ENCODE measurements at regions of chr3 and their contacts with region 1.

Region 1: DNA sequence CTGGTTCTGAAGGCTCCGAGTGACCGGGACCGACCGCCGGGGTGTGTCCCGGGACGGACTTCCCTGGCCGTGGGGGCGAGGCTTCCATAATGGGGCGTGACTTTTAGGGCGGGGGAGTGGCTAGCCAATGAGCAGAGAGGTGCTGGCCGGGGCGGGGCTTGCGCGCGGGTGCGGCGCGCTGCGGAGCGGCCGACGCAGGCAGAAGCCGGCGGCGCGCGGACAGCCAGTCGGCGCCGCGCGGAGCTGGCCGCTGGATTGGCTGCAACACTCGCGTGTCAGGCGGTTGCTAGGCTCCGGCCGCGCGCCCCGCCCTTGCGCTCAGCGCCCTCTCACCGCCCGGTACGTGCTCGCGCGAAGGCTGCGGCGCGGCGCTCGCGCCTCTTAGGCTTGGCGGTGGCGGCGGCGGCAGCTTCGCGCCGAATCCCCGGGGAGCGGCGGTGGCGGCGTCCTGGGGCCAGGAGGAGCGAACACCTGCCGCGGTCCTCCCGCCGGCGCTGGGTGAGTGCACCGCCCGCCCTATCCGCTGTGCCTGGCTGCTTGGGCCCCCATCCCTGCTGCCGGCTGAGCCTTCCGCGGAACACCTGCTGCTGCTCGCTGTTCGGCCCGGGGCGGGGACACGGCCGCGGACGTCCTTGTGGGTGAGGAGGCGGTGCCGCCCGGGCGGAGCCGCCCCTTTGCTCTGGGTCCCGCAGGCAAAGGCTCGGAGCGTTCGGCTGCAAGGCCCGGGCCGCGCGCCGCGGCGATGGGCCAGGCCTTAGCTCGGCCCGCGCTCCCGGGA is at the start of gene DAG1:
- DNase-seq: peak; percentile 99
- H3K4me3 ChIP-seq: peak within 1 kb of the TSS; percentile 43 to 95 (median 77)
- H3K27ac ChIP-seq: peak within 1 kb of the TSS; percentile 97 to 100 (median 99)
- H3K4me1 ChIP-seq: peaks cover 18 to 30% of the 10 kb centered on the region in 2 donors
- H3K27me3 ChIP-seq: no peaks in the 10 kb centered on the region
- CTCF ChIP-seq: no peak
- POLR2A ChIP-seq: peak; percentile 85 to 91
- total RNA-seq, gene DAG1: 55.1 to 86.7 (median 79.6) TPM

Region 2: GRCh38 chr3:49668414-49668797 is 198.3 kb after region 1 on chr3:
- intact Hi-C with region 1: loop called (anchors 10 kb)
- DNase-seq: no peak
- H3K4me3 ChIP-seq: no peak overlapping the region
- H3K27ac ChIP-seq: no peak overlapping the region
- H3K4me1 ChIP-seq: peaks cover 4 to 7% of the 10 kb centered on the region in 2 donors
- H3K27me3 ChIP-seq: no peaks in the 10 kb centered on the region
- CTCF ChIP-seq: no peak
- POLR2A ChIP-seq: no peak

Region 3: DNA sequence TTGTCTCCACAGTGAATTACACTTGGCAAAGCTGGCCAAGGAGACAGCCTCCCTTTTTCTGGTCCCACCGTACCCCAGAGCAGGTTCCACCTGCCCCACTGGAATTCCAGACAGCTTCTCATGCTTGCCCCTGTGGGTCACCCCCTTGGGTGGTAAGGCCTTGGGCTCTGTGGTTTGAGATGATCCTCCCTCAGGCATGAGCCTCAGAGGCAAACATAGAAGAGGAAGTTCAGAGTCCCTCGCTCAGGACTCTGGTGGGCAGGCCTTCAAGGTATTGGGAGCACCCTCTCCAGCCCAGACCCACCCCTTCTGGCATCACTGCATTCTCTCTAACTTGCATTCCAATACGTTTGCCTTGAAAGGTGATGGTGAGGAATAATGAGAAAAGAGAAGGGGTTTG is 361.2 kb after region 1 on chr3:
- intact Hi-C with region 1: no loop called
- DNase-seq: no peak
- H3K4me3 ChIP-seq: no peak overlapping the region
- H3K27ac ChIP-seq: no peak overlapping the region
- H3K4me1 ChIP-seq: no peaks in the 10 kb centered on the region
- H3K27me3 ChIP-seq: no peaks in the 10 kb centered on the region
- CTCF ChIP-seq: no peak
- POLR2A ChIP-seq: no peak